ENCODE measurements at regions of chr13 and their contacts with region 1.

Region 1: DNA sequence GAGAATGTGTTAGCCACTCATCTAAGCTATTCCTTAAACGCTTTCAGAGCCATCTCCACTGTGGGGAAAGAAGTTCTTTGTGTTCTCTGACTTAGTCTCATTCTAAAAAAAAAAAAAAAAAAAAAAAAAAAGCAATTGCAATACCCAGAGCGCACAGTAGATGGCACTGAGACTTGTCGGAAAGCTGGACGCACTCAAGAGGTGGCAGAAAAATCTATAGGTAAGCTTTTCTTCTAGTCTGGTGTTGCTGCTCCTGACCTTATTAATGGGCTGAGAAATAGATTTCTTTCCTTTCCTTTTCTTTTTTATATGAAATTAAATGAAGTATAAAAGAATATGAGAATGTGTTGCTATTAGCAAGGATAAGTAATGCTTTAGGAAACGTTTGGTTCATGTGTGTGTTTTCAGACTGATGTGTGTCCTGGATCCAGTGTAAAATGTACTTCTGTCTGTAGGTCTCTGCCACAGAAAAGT is 4.7 kb upstream of the GJB2 start:
- H3K4me3 Mint-ChIP-seq: no peak overlapping the region
- H3K27ac Mint-ChIP-seq: no peak overlapping the region
- H3K4me1 Mint-ChIP-seq: peaks cover 20% of the 10 kb centered on the region
- H3K27me3 Mint-ChIP-seq: peaks cover 37% of the 10 kb centered on the region

Region 2: GRCh38 chr13:20136781-20137703 is 60.4 kb before region 1 on chr13:
- intact Hi-C with region 1: no loop called
- H3K4me3 Mint-ChIP-seq: peak overlapping the region; percentile 13
- H3K27ac Mint-ChIP-seq: no peak overlapping the region
- H3K4me1 Mint-ChIP-seq: no peaks in the 10 kb centered on the region
- H3K27me3 Mint-ChIP-seq: peaks cover 51% of the 10 kb centered on the region

Region 3: GRCh38 chr13:20231839-20232555 is 34.6 kb after region 1 on chr13 and contains the start of gene GJB6:
- intact Hi-C with region 1: no loop called
- H3K4me3 Mint-ChIP-seq: peak within 1 kb of the TSS; percentile 49
- H3K27ac Mint-ChIP-seq: no peak within 1 kb of the TSS
- H3K4me1 Mint-ChIP-seq: peaks cover 10% of the 10 kb centered on the region
- H3K27me3 Mint-ChIP-seq: peaks cover 53% of the 10 kb centered on the region

Region 4: GRCh38 chr13:20264271-20265018 is 67.0 kb after region 1 on chr13:
- intact Hi-C with region 1: no loop called
- H3K4me3 Mint-ChIP-seq: no peak overlapping the region
- H3K27ac Mint-ChIP-seq: no peak overlapping the region
- H3K4me1 Mint-ChIP-seq: no peaks in the 10 kb centered on the region
- H3K27me3 Mint-ChIP-seq: peaks cover 2% of the 10 kb centered on the region

Region 5: DNA sequence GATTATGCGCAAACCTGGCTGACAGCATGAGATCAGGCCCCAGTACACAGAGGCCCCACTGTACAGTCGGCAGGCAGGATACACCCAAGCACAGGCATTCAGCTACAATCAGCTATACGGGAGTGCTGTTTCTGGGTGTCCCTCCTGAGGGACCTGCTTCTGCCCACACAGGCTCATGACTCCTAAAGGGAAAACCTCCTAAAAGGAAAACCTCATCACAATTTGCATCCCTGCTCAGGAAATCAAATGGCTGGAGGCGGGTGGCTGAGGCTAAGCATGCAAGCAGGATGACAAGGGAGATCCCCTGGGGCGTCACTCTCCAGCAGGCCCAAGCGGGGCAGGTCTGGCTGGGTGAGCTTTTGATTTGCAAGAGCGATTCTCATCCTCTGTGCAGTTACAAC is 228.4 kb after region 1 on chr13:
- intact Hi-C with region 1: loop called (anchors 10 kb)
- H3K4me3 Mint-ChIP-seq: no peak overlapping the region
- H3K27ac Mint-ChIP-seq: no peak overlapping the region
- H3K4me1 Mint-ChIP-seq: peaks cover 8% of the 10 kb centered on the region
- H3K27me3 Mint-ChIP-seq: no peaks in the 10 kb centered on the region

Region 6: DNA sequence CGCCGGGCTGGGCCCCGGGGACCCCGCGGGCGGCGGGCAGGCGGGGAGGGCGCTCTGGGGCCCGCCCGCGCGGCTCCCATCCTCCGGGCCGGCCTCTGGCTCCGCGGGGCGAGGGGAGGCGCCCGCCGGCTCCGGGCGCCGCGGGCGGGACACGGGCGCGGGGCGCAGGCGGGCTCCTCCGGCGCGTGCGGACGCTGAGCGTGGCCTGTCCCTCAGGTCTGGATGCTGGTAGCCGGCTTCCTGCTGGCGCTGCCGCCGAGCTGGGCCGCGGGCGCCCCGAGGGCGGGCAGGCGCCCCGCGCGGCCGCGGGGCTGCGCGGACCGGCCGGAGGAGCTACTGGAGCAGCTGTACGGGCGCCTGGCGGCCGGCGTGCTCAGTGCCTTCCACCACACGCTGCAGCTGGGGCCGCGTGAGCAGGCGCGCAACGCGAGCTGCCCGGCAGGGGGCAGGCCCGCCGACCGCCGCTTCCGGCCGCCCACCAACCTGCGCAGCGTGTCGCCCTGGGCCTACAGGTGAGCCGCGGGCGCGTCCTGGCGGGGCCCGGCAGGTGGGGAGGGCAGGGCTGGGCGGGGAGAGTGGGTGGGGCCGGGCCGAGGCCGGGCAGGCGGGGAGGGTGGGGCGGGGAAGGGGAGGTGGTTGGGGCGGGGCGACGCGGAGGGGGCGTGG is 506.5 kb after region 1 on chr13:
- intact Hi-C with region 1: loop called (anchors 10 kb)
- H3K4me3 Mint-ChIP-seq: peak overlapping the region; percentile 27
- H3K27ac Mint-ChIP-seq: no peak overlapping the region
- H3K4me1 Mint-ChIP-seq: peaks cover 23% of the 10 kb centered on the region
- H3K27me3 Mint-ChIP-seq: peaks cover 52% of the 10 kb centered on the region

Region 7: DNA sequence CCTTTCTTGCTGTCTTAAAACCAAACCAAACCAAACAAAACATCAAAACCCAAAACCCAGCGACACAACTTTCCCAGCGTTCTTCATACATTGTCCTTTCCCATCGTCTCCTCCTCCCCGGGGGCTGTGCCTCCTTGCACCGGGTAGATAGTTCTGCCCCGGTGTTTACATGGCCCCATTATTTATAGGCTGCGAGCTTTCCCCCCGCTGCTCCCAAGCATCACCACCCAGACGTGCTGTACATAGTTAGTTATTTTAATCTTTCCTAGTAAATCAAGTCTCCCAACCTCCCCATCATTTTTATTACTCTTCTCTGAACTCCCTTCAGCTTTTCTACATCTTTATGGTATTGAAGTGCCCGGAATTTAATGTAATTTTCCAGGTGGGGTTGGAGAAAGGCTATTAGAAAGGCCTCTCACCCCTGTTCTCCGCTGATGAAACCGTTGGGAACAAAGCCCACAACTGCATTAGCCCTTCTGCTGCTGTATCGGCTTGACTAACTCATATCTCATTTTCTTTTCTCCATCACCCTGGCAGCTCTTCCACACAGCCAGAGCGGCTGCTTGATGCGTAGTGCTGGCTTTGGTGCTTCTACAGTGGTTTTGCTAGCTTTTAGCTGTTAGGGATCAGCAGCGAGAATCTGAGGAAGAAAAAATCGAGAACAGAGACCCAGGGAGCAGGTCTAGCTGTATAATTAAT is 1526.6 kb after region 1 on chr13:
- intact Hi-C with region 1: no loop called
- H3K4me3 Mint-ChIP-seq: no peak overlapping the region
- H3K27ac Mint-ChIP-seq: no peak overlapping the region
- H3K4me1 Mint-ChIP-seq: no peaks in the 10 kb centered on the region
- H3K27me3 Mint-ChIP-seq: no peaks in the 10 kb centered on the region

Measured in dendritic cell treated with granulocyte-macrophage colony-stimulating factor and Interleukin-4, amounts not matched to agents 40 ng/mL and 50 ng/mL, for 4 days (primary cell).